Calu3 (cell line): ENCODE measurements at regions of chr15 and their contacts with region 1.

Region 1: DNA sequence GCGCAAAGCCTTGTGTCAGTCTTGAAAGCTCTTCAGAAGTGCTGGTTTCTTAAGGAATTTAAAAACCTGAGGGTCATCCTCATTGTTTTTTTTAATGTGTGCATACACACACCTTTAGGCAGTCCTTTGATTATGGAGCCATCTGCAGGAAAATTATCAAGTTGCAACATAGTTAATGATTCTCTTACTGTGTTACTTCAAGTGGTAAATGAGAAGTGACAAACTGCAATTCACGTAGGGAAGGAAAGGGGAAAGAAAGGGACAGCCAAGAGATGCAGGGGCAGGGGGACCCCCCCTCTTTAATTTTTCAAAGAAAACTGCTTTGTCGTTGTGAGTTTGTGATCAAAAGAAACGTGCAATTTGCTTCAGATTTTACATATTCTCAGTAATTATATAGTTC is 162.4 kb upstream of the CGNL1 start:
- DNase-seq: no peak
- H3K4me3 Mint-ChIP-seq: no peak overlapping the region
- H3K27ac Mint-ChIP-seq: peak overlapping the region; percentile 25
- H3K4me1 Mint-ChIP-seq: peaks cover 50% of the 10 kb centered on the region
- H3K27me3 Mint-ChIP-seq: no peaks in the 10 kb centered on the region
- CTCF ChIP-seq: no peak

Region 2: DNA sequence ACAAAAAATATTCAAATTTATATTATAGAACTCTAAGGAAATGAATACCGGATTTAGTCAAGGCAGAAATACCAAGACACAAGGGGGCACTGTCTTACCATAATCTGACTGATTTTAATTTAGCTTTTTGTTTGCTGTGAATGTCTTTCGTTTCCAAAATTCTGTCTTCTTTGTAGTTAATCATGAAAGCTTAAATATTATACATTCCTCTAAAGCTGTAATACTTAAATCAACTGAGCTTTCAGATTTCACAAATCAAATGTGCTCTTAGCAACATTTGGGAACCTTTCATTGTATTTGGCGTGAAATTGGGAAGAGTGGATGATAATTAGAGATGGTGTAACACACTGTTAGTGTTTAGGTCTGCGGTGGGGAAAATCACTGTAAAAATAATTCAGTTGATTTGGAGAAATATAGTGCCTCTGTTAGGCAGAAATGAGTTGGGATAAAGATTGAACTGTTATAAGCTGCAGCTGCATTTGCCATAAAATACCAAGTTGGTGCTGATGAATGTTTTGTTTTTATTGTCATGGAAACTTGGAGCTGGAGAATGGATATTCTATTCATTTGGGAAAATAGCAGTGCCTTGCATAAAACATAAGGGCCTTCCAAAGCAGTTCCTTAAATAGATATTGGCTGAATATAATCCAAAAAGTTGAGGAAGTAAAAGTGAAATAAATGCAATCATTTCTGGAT is 67.2 kb before region 1 on chr15:
- CTCF ChIA-PET with region 1: interaction called, 12 read pairs
- intact Hi-C with region 1: loop called (anchors 2 kb)
- DNase-seq: peak; percentile 31
- H3K4me3 Mint-ChIP-seq: no peak overlapping the region
- H3K27ac Mint-ChIP-seq: no peak overlapping the region
- H3K4me1 Mint-ChIP-seq: no peaks in the 10 kb centered on the region
- H3K27me3 Mint-ChIP-seq: no peaks in the 10 kb centered on the region
- CTCF ChIP-seq: peak; percentile 63

Region 3: DNA sequence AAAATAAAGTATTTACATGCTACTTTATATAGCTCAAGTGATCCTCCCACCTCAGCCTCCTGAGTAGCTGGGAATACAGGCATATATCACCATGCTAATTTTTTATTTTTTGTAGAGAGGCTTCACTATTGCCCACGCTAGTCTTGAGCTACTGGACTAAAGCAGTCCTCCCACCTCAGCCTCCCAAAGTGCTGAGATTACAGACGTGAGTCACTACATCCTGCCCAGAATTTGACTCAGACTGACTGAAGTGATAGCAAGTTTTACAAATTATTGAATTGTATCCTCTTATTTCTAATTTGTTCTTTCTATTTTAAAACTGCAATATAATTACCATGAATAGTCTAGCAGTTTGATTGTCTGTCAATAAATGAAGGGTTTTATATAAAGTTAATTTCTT is 47.9 kb before region 1 on chr15:
- CTCF ChIA-PET with region 1: no interaction called
- intact Hi-C with region 1: loop called (anchors 5 kb)
- DNase-seq: peak; percentile 30
- H3K4me3 Mint-ChIP-seq: no peak overlapping the region
- H3K27ac Mint-ChIP-seq: no peak overlapping the region
- H3K4me1 Mint-ChIP-seq: peaks cover 25% of the 10 kb centered on the region
- H3K27me3 Mint-ChIP-seq: no peaks in the 10 kb centered on the region
- CTCF ChIP-seq: no peak